ENCODE measurements at regions of chr10 and their contacts with region 1.

Region 1: DNA sequence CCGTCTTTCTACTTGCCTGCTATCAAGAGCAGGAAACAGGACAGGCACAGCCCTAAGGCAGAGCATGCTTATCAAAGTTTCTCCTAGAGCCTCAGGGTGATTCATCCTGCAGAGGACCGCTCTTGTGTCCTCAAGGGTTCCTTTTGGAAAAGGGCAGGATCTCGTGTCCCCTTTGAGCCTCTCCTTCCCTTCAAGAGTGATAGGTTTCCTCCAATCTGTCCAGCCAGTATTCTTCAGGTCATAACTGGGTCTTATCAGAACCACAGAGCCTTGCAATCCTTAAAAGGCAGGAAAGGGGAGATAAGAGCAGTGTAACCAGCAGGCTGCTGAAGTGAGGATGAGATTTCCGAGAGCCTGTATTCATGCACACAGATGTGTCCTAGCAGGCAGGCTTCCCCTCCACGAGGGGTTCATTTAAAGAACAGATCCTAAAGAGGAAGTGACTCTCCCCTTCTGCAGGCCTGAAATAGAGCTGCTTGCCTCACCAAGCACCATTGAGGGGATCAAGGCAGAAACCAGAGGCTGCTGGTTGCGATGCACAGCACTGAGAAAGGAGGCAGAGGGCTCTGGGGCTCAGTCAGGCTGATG is 90.5 kb upstream of the SVIL start:
- DNase-seq: no peak
- H3K4me3 ChIP-seq: no peak overlapping the region
- H3K27ac ChIP-seq: peak overlapping the region; percentile 28 to 66
- H3K4me1 ChIP-seq: peaks cover 0 to 93% (median 38%) of the 10 kb centered on the region in 4 donors
- H3K27me3 ChIP-seq: no peaks in the 10 kb centered on the region
- CTCF ChIP-seq: no peak

Region 2: DNA sequence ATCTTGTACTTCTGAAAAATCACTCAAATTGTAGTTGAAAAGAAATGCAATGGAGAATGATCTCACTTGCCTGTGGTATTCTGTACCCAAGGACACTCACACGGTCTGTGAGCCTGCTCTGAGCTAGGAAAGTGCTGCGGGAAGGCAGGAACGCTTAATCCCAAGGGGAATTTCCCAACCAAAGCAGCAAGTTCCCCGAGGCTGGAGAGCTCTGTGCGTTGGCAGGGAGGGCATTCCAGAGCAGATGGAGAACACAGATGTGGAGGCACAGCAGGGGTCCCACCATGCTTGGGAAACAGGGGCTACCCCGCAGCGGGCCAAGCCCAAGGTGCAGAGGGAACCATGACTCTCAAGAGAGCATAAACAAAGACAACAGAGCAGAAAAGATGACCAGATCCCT is 104.1 kb before region 1 on chr10:
- intact Hi-C with region 1: loop called (anchors 10 kb)
- DNase-seq: peak; percentile 65 to 90
- H3K4me3 ChIP-seq: no peak overlapping the region
- H3K27ac ChIP-seq: peak overlapping the region; percentile 67 to 75
- H3K4me1 ChIP-seq: peaks cover 0 to 98% (median 53%) of the 10 kb centered on the region in 4 donors
- H3K27me3 ChIP-seq: no peaks in the 10 kb centered on the region
- CTCF ChIP-seq: no peak

Region 3: GRCh38 chr10:29746080-29746797 is 21.0 kb after region 1 on chr10:
- intact Hi-C with region 1: no loop called
- DNase-seq: no peak
- H3K4me3 ChIP-seq: no peak overlapping the region
- H3K27ac ChIP-seq: peak overlapping the region; percentile 46 to 50
- H3K4me1 ChIP-seq: peaks cover 0 to 31% (median 16%) of the 10 kb centered on the region in 4 donors
- H3K27me3 ChIP-seq: no peaks in the 10 kb centered on the region
- CTCF ChIP-seq: no peak

Region 4: DNA sequence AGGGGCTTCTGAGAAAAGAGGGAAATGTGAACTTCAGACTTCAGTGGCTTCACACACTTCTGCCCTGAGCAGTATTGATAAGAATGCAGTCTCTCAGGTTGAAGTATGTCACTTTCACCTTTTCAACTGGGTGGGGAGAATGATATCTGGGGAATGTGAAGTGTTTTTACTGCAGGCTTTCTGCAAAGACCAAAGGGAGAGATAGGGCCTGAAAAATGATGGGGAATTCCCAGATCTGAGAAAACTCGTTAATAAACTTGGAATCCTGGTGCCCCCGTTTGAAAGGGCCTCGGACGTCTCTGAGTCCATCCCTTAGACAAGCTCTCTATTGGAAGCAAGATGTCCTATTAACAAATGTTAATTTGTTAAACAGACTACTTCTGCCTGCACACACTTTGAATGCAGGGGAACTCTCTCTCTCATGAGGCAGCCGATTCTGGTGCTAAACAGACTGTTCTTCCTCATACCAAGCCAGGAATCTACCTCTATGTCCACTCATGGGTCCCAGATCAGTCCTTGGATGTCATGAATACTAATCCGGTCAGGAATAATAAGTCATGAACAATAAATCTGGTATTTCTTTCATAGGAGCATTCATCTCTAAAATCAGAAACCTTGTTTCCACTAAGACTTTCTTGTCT is 140.6 kb after region 1 on chr10:
- intact Hi-C with region 1: no loop called
- DNase-seq: no peak
- H3K4me3 ChIP-seq: no peak overlapping the region
- H3K27ac ChIP-seq: peak overlapping the region; percentile 6 to 43
- H3K4me1 ChIP-seq: peaks cover 0 to 29% (median 0%) of the 10 kb centered on the region in 4 donors
- H3K27me3 ChIP-seq: no peaks in the 10 kb centered on the region
- CTCF ChIP-seq: no peak

Region 5: GRCh38 chr10:30098613-30099012 is 373.4 kb after region 1 on chr10:
- intact Hi-C with region 1: no loop called
- DNase-seq: no peak
- H3K4me3 ChIP-seq: no peak overlapping the region
- H3K27ac ChIP-seq: no peak overlapping the region
- H3K4me1 ChIP-seq: no peaks in the 10 kb centered on the region
- H3K27me3 ChIP-seq: no peaks in the 10 kb centered on the region
- CTCF ChIP-seq: no peak